GM12878 (cell line): ENCODE measurements at regions of chr7 and their contacts with region 1.

Region 1: DNA sequence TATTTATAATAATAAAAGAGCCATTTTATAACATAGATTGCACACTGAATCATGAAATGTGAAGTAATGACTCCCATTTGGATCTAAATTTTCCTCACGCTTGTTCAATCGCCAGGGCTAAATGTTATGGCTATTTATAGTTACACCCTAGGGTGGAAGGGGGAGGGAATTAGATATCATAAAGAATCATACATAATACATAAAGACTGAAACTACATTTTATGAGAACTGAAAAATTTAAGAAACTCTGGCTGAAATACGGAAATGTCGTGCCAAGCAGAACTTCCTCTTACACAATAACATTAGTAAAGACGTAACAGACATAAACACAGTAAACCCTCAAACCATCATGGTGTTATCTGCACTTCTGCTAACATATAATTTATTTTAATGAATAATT is 327.5 kb upstream of the PHF14 start:
- DNase-seq: no peak
- ATAC-seq: peak; percentile 53
- H3K4me3 ChIP-seq: no peak overlapping the region
- H3K27ac ChIP-seq: no peak overlapping the region
- H3K4me1 ChIP-seq: no peaks in the 10 kb centered on the region
- H3K27me3 ChIP-seq: no peaks in the 10 kb centered on the region
- CTCF ChIP-seq: no peak
- EP300 ChIP-seq: no peak
- POLR2A ChIP-seq: no peak
- RAD21 ChIP-seq: no peak

Region 2: GRCh38 chr7:10708447-10708846 is 62.3 kb after region 1 on chr7:
- CTCF ChIA-PET with region 1: no interaction called
- POLR2A ChIA-PET with region 1: no interaction called
- RAD21 ChIA-PET with region 1: no interaction called
- SMC1A ChIA-PET with region 1: no interaction called
- in situ Hi-C with region 1: no loop called
- intact Hi-C with region 1: loop called (anchors 5 kb)
- DNase-seq: no peak
- ATAC-seq: peak; percentile 29; the same call in 1 of the 3 replicates
- H3K4me3 ChIP-seq: no peak overlapping the region
- H3K27ac ChIP-seq: no peak overlapping the region
- H3K4me1 ChIP-seq: peaks cover 5% of the 10 kb centered on the region
- H3K27me3 ChIP-seq: no peaks in the 10 kb centered on the region
- CTCF ChIP-seq: peak in 2 of 3 experiments; percentile 2 to 13; a peak in 2 of 6 replicates
- EP300 ChIP-seq: no peak
- POLR2A ChIP-seq: no peak
- RAD21 ChIP-seq: peak; percentile 29; the same call in 1 of the 2 replicates

Region 3: DNA sequence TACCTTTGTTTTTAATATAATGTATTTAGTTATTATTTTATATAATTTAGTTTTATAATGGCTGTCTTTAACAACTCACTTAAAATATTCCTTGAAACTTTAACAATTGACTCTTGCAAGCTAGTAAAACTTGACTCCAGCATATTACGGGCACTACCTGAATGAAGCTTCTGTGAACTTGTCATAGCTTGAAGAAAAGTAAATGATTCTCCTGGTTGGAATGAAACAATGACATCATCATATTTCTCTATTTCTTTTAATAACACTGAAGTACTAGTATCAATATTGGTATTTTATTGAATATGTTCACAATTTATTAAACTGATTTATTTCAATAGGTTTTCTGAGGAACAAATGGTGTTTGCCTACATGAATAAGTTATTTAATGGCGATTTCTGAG is 199.0 kb after region 1 on chr7:
- CTCF ChIA-PET with region 1: no interaction called
- POLR2A ChIA-PET with region 1: no interaction called
- RAD21 ChIA-PET with region 1: no interaction called
- SMC1A ChIA-PET with region 1: no interaction called
- in situ Hi-C with region 1: no loop called
- intact Hi-C with region 1: no loop called
- DNase-seq: no peak
- ATAC-seq: no peak
- H3K4me3 ChIP-seq: no peak overlapping the region
- H3K27ac ChIP-seq: no peak overlapping the region
- H3K4me1 ChIP-seq: no peaks in the 10 kb centered on the region
- H3K27me3 ChIP-seq: no peaks in the 10 kb centered on the region
- CTCF ChIP-seq: no peak
- EP300 ChIP-seq: no peak
- POLR2A ChIP-seq: no peak
- RAD21 ChIP-seq: no peak